AG04450 (cell line): ENCODE measurements at regions of chr15 and their contacts with region 1.

Region 1: GRCh38 chr15:51132384-51133139 is 37.9 kb upstream of the TNFAIP8L3 start:
- DNase-seq: peak; percentile 81
- H3K4me3 ChIP-seq: no peak overlapping the region
- H3K27ac ChIP-seq: peak overlapping the region; percentile 80
- H3K27me3 ChIP-seq: no peaks in the 10 kb centered on the region
- CTCF ChIP-seq: peak; percentile 98

Region 2: GRCh38 chr15:51121118-51121517 is 11.4 kb before region 1 on chr15:
- CTCF ChIA-PET with region 1: interaction called, 16 read pairs
- POLR2A ChIA-PET with region 1: no interaction called
- DNase-seq: peak; percentile 77
- H3K4me3 ChIP-seq: no peak overlapping the region
- H3K27ac ChIP-seq: peak overlapping the region; percentile 23
- H3K27me3 ChIP-seq: no peaks in the 10 kb centered on the region
- CTCF ChIP-seq: no peak

Region 3: DNA sequence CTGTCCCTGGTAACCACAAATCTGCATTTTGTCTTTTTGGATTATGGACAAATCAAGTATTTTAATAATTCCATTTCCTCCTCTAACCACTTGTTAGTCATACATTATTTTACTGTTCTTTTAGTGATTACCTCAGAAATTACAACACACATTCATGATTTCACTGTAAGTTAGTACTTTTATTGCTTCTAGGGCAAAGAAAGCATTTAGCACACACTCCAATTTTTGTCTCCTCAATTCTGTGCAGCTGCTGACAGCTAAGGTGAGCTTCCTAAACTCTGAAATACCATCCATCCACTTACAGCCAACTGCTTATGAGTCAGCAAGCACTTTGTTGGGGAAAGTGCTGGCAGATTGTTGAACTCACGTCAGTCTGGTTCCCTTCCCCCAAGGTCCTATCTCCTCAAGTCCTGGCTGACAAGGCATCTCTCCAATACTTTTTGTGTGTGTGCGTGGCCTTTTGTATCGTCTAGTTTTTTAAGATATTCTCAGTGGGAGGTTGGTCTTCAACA is 11.5 kb after region 1 on chr15:
- CTCF ChIA-PET with region 1: interaction called, 12 read pairs
- POLR2A ChIA-PET with region 1: interaction called, 4 read pairs
- DNase-seq: peak; percentile 20
- H3K4me3 ChIP-seq: no peak overlapping the region
- H3K27ac ChIP-seq: no peak overlapping the region
- H3K27me3 ChIP-seq: peaks cover 3% of the 10 kb centered on the region
- CTCF ChIP-seq: no peak